CD4-positive, alpha-beta memory T cell (primary cell): ENCODE measurements at regions of chr15 and their contacts with region 1.

Region 1: DNA sequence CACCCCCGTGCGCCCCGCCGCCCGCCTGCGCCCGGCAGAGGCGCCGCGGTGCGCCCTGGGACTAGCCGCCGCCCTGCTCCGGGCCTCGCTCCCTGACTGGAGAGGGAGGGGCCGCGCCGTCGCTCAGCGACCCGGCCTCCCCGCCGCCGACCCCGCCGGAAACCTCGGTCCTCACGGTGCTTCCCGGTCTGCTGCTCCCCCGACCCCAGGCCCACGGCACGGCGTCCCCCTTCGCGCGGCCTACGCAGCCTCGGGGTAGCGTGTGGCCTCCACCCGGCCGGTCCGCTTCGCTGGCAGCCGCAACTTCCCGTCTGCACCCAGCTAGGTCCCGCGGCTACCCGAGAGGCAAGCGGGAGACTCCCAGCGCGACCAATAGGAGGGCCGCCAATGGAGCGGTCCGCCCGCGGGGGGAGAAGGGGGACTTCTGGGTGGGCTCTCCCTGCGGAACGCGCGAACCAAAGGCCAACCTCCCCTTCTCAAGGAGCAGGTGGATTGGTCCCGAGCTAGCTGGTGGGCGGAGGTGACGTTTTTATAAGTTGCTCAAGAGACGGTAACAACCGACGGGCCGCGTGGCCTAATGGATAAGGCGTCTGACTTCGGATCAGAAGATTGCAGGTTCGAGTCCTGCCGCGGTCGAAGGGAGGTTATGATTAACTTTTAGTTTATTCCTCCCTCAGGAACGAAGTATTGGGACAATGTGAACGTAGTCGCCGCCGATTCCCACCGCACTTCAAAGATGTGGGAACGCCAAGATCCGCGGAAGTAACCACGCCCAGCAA is at the start of gene POLG:
- DNase-seq: peak; percentile 99 to 100 (median 99)
- H3K4me3 ChIP-seq: peak within 1 kb of the TSS; percentile 81 to 92
- H3K4me3 Mint-ChIP-seq: peak within 1 kb of the TSS; percentile 90 to 100 (median 94)
- H3K27ac ChIP-seq: peak within 1 kb of the TSS; percentile 69
- H3K27ac Mint-ChIP-seq: peak within 1 kb of the TSS; percentile 88 to 100 (median 98)
- H3K4me1 ChIP-seq: peaks cover 54% of the 10 kb centered on the region
- H3K4me1 Mint-ChIP-seq: peaks cover 37 to 59% (median 47%) of the 10 kb centered on the region in 4 donors
- H3K27me3 ChIP-seq: no peaks in the 10 kb centered on the region
- H3K27me3 Mint-ChIP-seq: peaks cover 2 to 7% of the 10 kb centered on the region in 2 donors
- total RNA-seq, gene POLG: 148 to 151 TPM

Region 2: GRCh38 chr15:89243691-89244471 is 90.8 kb before region 1 on chr15 and contains the start of gene FANCI:
- CTCF ChIA-PET with region 1: no interaction called
- POLR2A ChIA-PET with region 1: interaction called, 19 read pairs
- intact Hi-C with region 1: loop called (anchors 1 kb)
- DNase-seq: peak; percentile 93 to 96 (median 94)
- H3K4me3 ChIP-seq: peak within 1 kb of the TSS; percentile 95
- H3K4me3 Mint-ChIP-seq: peak within 1 kb of the TSS; percentile 91 to 98 (median 94)
- H3K27ac ChIP-seq: peak within 1 kb of the TSS; percentile 43
- H3K27ac Mint-ChIP-seq: peak within 1 kb of the TSS; percentile 80 to 92 (median 89)
- H3K4me1 ChIP-seq: peaks cover 14% of the 10 kb centered on the region
- H3K4me1 Mint-ChIP-seq: peaks cover 20 to 40% (median 30%) of the 10 kb centered on the region in 4 donors
- H3K27me3 ChIP-seq: no peaks in the 10 kb centered on the region
- H3K27me3 Mint-ChIP-seq: no peaks in the 10 kb centered on the region
- total RNA-seq, gene FANCI: 10.9 to 19.0 TPM

Region 3: GRCh38 chr15:89321521-89322410 is 12.9 kb before region 1 on chr15:
- CTCF ChIA-PET with region 1: interaction called, 3 read pairs
- POLR2A ChIA-PET with region 1: interaction called, 13 read pairs
- intact Hi-C with region 1: no loop called
- DNase-seq: no peak
- H3K4me3 ChIP-seq: no peak overlapping the region
- H3K4me3 Mint-ChIP-seq: no peak overlapping the region
- H3K27ac ChIP-seq: no peak overlapping the region
- H3K27ac Mint-ChIP-seq: peak overlapping the region in 4 of 7 donors; percentile 10 to 76 (median 58)
- H3K4me1 ChIP-seq: no peaks in the 10 kb centered on the region
- H3K4me1 Mint-ChIP-seq: peaks cover 0 to 28% (median 8%) of the 10 kb centered on the region in 4 donors
- H3K27me3 ChIP-seq: no peaks in the 10 kb centered on the region
- H3K27me3 Mint-ChIP-seq: no peaks in the 10 kb centered on the region